Activated T-helper 2 cell treated with anti-CD3 and anti-CD28 coated beads, Interferon-gamma antibody, Interleukin-2, Interleukin-4, amounts not matched to agents 10 μg/mL and 5 μg/mL and 100 μg/mL, durations not matched to agents 14 hours and 24 hours and 36 hours (primary cell): ENCODE measurements at regions of chr17 and their contacts with region 1.

Region 1: GRCh38 chr17:74070374-74070773 is 133.1 kb upstream of the RPL38 start:
- DNase-seq: no peak
- H3K4me3 Mint-ChIP-seq: no peak overlapping the region
- H3K27ac Mint-ChIP-seq: no peak overlapping the region
- H3K4me1 Mint-ChIP-seq: no peaks in the 10 kb centered on the region
- H3K27me3 Mint-ChIP-seq: no peaks in the 10 kb centered on the region

Region 2: DNA sequence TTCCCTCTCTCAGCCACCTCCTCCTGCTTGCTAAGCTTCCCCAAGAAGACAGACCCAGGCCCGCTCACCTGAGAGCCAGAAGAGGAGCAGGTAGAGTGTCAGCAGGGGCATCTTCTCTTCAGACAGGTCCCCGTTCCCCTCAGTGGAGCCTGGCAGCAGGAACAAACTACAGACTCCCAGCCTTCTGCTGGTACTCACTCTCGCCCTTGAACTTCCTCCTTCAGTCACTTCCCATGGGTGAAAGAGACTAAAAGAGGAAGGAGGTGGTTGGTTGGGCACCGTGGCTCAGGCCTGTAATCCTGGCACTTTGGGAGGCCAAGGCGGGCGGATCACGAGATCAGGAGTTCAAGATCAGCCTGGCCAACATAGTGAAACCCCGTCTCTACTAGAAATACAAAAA is 642.4 kb after region 1 on chr17 and contains the start of gene CD300LF:
- intact Hi-C with region 1: loop called (anchors 5 kb)
- DNase-seq: no peak
- H3K4me3 Mint-ChIP-seq: no peak within 1 kb of the TSS
- H3K27ac Mint-ChIP-seq: no peak within 1 kb of the TSS
- H3K4me1 Mint-ChIP-seq: peaks cover 6% of the 10 kb centered on the region
- H3K27me3 Mint-ChIP-seq: peaks cover 31% of the 10 kb centered on the region
- total RNA-seq, gene CD300LF: not detected in 2 replicates